CD8-positive, alpha-beta T cell (primary cell): ENCODE measurements at regions of chr7 and their contacts with region 1.

Region 1: DNA sequence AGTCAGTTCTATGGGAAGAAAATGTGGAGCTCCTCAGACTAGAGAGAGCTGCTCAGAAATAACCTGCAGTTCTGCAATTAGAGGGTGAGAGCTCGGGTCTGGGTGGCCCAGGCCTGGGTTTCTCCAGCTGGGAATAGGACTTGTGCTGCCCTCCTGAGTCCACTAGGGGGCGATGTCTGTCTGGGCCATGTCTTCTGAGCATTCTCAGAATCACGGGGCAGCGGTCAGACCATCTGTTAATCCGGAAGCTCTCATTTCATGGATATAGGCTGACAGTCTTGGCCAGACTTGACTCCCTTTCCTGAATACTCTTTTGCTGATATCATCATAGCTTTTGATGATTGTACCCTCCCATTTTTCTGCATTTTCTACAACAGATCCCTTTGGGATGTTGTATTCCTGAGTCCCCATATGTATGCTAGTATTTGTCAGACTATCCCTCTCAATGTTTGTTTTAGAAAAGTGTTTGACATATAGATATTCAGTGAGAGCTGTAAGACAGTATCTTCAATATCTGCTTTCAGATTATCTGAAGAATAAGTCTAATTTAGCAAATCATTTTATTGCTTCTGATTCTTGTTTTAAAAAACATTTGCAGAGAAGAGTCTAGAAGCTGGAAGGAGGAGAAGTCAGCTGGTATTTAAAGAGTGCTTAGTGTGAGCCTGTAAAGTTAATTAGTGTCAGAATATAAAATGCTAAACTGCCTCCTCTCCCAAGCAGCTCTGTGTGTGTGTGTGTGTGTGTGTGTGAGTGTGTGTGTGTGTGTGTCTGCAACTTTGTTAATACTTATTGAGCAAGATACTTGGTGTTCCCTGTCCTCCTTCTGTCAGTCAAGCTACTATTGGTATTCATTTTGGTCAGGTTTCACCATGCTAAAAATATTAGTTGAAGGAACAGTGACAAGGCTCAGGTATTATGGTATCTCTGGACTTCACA is 38.0 kb downstream of the STARD3NL start:
- DNase-seq: peak; percentile 55 to 92 (median 78)
- ATAC-seq: peak; percentile 80
- H3K4me3 ChIP-seq: peak overlapping the region in 1 of 2 experiments; percentile 31
- H3K4me3 Mint-ChIP-seq: peak overlapping the region; percentile 19
- H3K27ac ChIP-seq: peak overlapping the region in 1 of 2 experiments; percentile 85
- H3K27ac Mint-ChIP-seq: peak overlapping the region; percentile 93
- H3K4me1 ChIP-seq: peaks cover 21% of the 10 kb centered on the region
- H3K4me1 Mint-ChIP-seq: peaks cover 47% of the 10 kb centered on the region
- H3K27me3 ChIP-seq: no peaks in the 10 kb centered on the region
- H3K27me3 Mint-ChIP-seq: no peaks in the 10 kb centered on the region
- CTCF ChIP-seq: peak; percentile 97

Region 2: DNA sequence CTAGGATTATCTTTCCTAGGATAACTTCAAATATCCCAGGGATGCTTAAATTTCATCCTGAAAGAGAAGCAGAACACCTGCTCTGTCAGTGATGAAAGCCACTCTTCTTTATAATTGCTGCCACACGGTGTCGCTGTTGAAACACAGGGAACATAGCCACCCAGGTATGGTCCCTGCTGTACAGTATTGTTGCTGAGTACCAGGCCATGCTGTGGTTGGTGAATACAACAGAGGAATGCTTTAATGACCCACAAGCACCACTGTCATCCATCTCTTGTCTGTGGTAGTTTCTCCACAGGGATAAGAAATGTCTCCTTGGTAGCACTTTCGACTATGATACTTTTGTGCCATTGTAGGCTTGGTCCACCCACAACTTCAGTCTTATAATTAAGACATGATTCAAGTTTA is 108.5 kb before region 1 on chr7:
- CTCF ChIA-PET with region 1: interaction called, 66 read pairs
- POLR2A ChIA-PET with region 1: no interaction called
- intact Hi-C with region 1: loop called in 1 of 2 experiments (anchors 2 kb)
- DNase-seq: peak; percentile 33 to 80 (median 71)
- ATAC-seq: peak; percentile 87
- H3K4me3 ChIP-seq: no peak overlapping the region
- H3K4me3 Mint-ChIP-seq: no peak overlapping the region
- H3K27ac ChIP-seq: no peak overlapping the region
- H3K27ac Mint-ChIP-seq: no peak overlapping the region
- H3K4me1 ChIP-seq: no peaks in the 10 kb centered on the region
- H3K4me1 Mint-ChIP-seq: peaks cover 2% of the 10 kb centered on the region
- H3K27me3 ChIP-seq: peaks cover 0 to 2% of the 10 kb centered on the region in 2 experiments
- H3K27me3 Mint-ChIP-seq: peaks cover 8% of the 10 kb centered on the region
- CTCF ChIP-seq: peak; percentile 89

Region 3: DNA sequence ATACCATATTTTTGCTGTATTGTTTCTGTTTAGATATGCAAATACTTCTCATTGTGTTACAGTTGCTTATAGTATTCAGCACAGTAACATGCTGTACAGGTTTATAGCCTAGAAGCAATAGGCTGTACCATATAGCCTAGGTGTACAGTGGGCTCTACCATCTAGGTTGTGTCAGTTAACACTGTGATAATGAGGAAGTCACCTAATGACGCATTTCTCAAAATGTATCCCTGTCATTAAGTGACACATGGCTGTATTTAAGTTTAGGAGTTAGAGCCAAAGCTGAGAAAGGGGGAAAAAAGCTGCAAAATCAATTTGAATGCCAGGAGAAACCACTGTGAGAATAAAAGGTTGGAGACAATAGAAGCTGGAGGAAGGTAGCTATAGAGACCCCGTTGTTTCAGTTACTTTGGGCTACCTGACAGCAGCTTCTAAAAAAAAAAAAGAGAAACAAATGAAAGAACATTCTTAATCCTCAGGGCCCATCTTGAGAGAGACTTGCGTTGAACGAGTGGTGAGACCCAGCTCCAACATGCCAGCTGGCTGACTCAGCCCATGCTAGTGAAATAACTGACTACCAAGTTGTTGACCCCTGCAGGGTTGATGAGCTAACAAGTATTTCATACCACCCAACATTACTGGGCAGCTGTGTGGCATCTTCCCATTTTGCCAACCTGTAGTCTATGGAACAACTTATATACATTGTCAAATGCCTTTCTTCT is 29.2 kb before region 1 on chr7:
- CTCF ChIA-PET with region 1: interaction called, 22 read pairs
- POLR2A ChIA-PET with region 1: no interaction called
- intact Hi-C with region 1: no loop called
- DNase-seq: no peak
- ATAC-seq: no peak
- H3K4me3 ChIP-seq: no peak overlapping the region
- H3K4me3 Mint-ChIP-seq: no peak overlapping the region
- H3K27ac ChIP-seq: no peak overlapping the region
- H3K27ac Mint-ChIP-seq: no peak overlapping the region
- H3K4me1 ChIP-seq: no peaks in the 10 kb centered on the region
- H3K4me1 Mint-ChIP-seq: peaks cover 52% of the 10 kb centered on the region
- H3K27me3 ChIP-seq: no peaks in the 10 kb centered on the region
- H3K27me3 Mint-ChIP-seq: no peaks in the 10 kb centered on the region
- CTCF ChIP-seq: no peak

Region 4: GRCh38 chr7:38232502-38233366 is 16.7 kb after region 1 on chr7:
- CTCF ChIA-PET with region 1: interaction called, 68 read pairs
- POLR2A ChIA-PET with region 1: interaction called, 14 read pairs
- intact Hi-C with region 1: loop called in 1 of 2 experiments (anchors 2 kb)
- DNase-seq: peak; percentile 53 to 95 (median 72)
- ATAC-seq: peak; percentile 77
- H3K4me3 ChIP-seq: peak overlapping the region in 1 of 2 experiments; percentile 17
- H3K4me3 Mint-ChIP-seq: peak overlapping the region; percentile 69
- H3K27ac ChIP-seq: peak overlapping the region; percentile 36 to 78
- H3K27ac Mint-ChIP-seq: peak overlapping the region; percentile 94
- H3K4me1 ChIP-seq: peaks cover 45% of the 10 kb centered on the region
- H3K4me1 Mint-ChIP-seq: peaks cover 89% of the 10 kb centered on the region
- H3K27me3 ChIP-seq: no peaks in the 10 kb centered on the region
- H3K27me3 Mint-ChIP-seq: no peaks in the 10 kb centered on the region
- CTCF ChIP-seq: no peak

Region 5: GRCh38 chr7:38327637-38328036 is 111.6 kb after region 1 on chr7:
- CTCF ChIA-PET with region 1: interaction called, 76 read pairs
- POLR2A ChIA-PET with region 1: interaction called, 8 read pairs
- intact Hi-C with region 1: no loop called
- DNase-seq: peak in 1 of 9 experiments; percentile 39
- ATAC-seq: no peak
- H3K4me3 ChIP-seq: no peak overlapping the region
- H3K4me3 Mint-ChIP-seq: peak overlapping the region; percentile 29
- H3K27ac ChIP-seq: peak overlapping the region in 1 of 2 experiments; percentile 64
- H3K27ac Mint-ChIP-seq: peak overlapping the region; percentile 62
- H3K4me1 ChIP-seq: peaks cover 19% of the 10 kb centered on the region
- H3K4me1 Mint-ChIP-seq: peaks cover 49% of the 10 kb centered on the region
- H3K27me3 ChIP-seq: no peaks in the 10 kb centered on the region
- H3K27me3 Mint-ChIP-seq: no peaks in the 10 kb centered on the region
- CTCF ChIP-seq: no peak

Region 6: GRCh38 chr7:38351601-38352000 is 135.6 kb after region 1 on chr7:
- CTCF ChIA-PET with region 1: interaction called, 95 read pairs
- POLR2A ChIA-PET with region 1: interaction called, 3 read pairs
- intact Hi-C with region 1: no loop called
- DNase-seq: no peak
- ATAC-seq: no peak
- H3K4me3 ChIP-seq: peak overlapping the region in 1 of 2 experiments; percentile 36
- H3K4me3 Mint-ChIP-seq: peak overlapping the region; percentile 89
- H3K27ac ChIP-seq: peak overlapping the region in 1 of 2 experiments; percentile 4
- H3K27ac Mint-ChIP-seq: peak overlapping the region; percentile 95
- H3K4me1 ChIP-seq: peaks cover 5% of the 10 kb centered on the region
- H3K4me1 Mint-ChIP-seq: peaks cover 62% of the 10 kb centered on the region
- H3K27me3 ChIP-seq: no peaks in the 10 kb centered on the region
- H3K27me3 Mint-ChIP-seq: no peaks in the 10 kb centered on the region
- CTCF ChIP-seq: no peak

Region 7: DNA sequence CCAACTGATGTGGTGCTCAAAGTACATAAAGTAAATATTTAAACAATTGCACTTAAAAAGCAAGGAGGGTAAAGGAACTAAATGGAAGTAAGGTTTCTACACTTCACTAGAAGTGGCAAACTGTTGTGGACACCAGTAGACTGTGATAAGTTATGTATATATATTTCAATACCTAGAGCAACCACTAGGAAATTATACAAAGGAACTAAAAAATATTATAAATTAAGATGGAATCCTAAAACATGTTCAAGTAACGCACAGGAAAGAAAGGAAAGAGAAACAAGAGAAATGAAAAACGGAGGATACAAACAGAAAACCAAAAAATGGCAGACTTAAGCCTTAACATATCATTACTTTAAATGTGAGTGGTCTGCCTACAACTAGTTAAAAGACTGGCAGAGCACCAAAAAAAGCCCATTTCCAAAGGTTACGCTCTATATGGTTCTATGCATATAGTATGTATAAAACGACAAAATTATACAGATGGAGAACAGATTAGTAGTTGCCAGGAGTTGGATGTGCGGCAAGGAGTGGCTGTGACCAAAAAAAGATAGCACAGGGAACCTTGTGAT is 673.9 kb after region 1 on chr7:
- CTCF ChIA-PET with region 1: no interaction called
- POLR2A ChIA-PET with region 1: no interaction called
- intact Hi-C with region 1: no loop called
- DNase-seq: no peak
- ATAC-seq: no peak
- H3K4me3 ChIP-seq: no peak overlapping the region
- H3K4me3 Mint-ChIP-seq: no peak overlapping the region
- H3K27ac ChIP-seq: no peak overlapping the region
- H3K27ac Mint-ChIP-seq: no peak overlapping the region
- H3K4me1 ChIP-seq: no peaks in the 10 kb centered on the region
- H3K4me1 Mint-ChIP-seq: peaks cover 28% of the 10 kb centered on the region
- H3K27me3 ChIP-seq: no peaks in the 10 kb centered on the region
- H3K27me3 Mint-ChIP-seq: no peaks in the 10 kb centered on the region
- CTCF ChIP-seq: peak; percentile 31